Right ventricle myocardium superior (tissue), 1 donor: ENCODE measurements at regions of chr6 and their contacts with region 1.

Region 1: DNA sequence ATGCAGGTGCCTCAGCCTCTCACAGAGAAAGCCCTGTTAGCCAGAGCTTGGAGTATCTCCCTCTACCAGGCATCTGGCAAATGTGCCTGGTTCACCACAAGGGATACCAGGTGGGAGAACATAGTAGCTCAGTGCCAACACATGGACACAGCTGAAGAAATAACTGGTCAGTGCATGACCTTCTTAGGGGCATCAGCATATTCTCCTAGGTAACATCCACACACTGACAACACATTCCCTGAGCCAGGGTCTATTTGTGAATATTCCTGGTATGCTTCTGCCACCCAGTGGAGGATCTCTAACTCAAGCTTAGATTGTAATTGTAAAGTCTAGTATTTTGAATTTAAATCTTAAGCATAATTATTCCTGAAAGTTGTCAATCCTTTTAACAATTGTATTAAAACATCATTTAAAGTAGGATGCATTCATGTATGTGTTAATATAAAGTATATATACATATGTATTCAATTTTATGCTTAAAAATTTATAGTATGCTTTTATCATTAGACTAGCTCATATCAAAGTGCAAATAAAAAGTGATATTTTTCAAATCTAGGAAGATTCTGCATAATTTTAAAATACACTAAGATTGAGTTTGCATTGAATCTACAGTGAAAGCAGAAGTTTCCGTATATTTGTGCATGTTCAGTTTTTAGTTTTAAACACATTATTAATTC is 45.3 kb upstream of the COL21A1 start:
- DNase-seq: no peak
- ATAC-seq: peak; percentile 92

Region 2: DNA sequence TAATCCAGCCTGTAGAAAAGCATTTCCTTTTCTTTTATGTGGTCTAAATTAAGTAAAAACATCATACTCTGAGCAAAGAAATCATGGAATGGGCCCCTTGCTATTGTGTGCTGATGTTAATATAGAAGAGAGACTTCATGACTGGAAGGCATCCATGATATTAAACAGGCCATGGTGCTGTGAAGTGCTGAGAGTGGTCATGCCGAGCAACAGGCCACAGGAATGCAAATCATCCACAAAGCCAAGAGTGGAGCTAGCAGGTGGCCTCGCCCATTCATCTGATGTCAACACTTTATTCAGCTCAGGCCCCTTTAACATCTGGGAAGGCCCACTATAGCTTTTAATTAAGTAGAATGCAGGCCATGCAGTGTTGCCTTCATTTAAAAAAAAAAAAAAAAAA is 598.5 kb before region 1 on chr6:
- intact Hi-C with region 1: no loop called
- DNase-seq: peak; percentile 36
- ATAC-seq: peak; percentile 97

Region 3: DNA sequence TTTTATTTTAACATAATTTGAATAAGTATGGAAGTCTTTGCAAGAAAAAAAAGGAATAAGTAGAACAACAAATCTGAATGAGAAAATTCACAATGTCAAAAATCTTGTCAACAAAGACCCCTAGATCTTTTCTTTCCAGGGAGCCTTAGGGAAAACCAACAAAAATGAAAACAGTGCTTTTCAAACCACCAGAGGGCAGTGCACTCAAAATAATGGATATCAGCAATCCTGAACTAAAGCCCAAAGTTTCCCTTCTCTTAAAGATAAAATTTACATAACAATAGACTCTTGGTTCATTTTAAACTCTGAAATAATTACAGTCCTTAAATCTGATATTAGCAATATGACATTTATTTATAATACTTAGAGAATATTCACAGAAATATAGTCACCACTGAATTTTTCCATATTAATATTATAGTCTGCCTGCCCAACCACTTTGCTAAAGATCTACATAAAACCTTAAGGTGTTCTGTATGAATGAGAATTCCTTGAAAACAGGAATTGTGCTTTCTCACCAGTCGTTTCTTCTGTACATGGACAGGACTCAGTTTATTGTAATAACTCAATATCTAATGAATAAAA is 311.9 kb before region 1 on chr6:
- intact Hi-C with region 1: loop called (anchors 2 kb)
- DNase-seq: no peak
- ATAC-seq: no peak

Region 4: DNA sequence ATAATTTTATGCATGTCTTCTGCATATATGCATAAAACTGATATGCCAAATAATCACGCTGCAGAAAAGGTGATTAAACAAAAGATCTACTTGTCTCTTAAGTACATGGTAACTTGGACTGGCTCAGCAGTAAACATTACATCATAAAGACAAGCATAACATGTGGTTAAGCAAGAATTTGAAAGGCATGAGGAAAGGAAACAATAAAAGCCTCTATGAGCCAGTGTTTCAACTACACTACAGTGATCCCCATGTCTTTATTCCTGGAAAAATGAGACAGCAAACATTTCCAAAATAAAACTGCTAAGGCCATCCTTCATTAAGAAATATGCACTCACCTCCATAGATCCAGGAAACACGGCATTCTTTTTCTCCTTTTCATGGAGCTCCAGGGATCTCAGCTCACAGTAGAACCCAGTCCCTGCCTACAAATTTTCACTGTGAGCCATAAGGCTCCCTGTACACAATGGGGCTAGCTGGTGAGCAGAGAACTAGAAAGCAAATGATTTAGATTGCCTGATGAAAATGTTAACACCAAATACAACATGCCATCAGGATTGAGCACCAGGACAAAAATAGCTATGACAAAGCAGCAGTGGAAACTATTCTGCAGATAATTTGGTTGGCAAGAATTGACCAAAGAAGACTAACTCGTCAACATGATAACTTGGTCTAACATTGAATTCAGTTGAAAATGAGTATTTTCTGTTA is 201.3 kb before region 1 on chr6:
- intact Hi-C with region 1: no loop called
- DNase-seq: no peak
- ATAC-seq: peak; percentile 78

Region 5: DNA sequence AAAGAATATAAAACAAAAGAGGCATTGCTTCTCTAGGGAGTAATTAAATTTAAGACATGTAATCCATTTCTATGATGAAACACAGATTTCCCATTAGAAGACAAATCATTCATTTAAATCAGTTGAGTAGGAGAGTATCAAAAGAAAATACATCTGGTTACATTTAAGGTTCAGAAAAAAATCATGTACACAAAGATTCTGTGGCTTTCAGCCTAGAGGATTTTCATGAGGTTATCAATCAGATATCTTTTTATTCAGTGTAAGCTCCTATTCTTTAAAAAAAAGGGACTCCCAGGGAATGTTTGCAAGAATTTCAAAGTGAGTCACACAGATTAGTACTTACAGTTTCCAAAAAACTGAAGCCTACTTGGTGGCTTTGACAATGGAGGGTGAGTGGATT is 70.1 kb before region 1 on chr6:
- intact Hi-C with region 1: no loop called
- DNase-seq: no peak
- ATAC-seq: no peak